AG04449 (cell line): ENCODE measurements at regions of chr17 and their contacts with region 1.

Region 1: DNA sequence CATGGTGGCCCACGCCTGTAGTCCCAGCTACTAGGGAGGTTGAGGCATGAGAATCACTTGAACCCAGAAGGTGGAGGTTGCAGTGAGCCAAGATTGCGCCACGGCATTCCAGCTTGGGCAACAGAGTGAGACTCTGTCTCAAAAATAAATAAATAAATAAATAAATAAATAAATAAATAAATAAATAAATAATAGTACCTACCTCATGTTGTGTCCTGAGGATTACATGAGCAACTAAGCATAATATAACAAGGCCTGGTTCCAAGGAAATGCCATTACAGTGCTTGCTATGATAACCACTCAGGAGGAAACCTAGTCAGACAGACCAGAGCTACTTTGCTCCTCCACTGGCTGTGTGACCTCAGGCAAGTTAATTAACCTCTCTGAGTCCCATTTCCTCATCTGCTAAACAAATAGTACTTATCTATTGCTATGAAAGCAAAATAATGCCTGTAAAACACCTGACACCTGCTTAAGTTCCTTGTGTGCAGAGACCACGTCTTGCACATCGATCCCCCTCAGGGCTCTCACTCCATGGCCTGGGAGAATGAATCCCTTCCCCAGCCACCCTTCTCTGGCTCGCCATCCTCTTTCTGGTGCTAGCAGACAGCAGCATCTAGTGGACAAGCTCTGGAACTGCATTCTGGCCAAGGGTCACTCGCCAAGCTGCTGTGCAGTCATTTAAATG is 7.5 kb downstream of the EPOP start:
- DNase-seq: no peak
- H3K4me3 ChIP-seq: no peak overlapping the region
- CTCF ChIP-seq: peak; percentile 98

Region 2: GRCh38 chr17:38498186-38498752 is 169.0 kb before region 1 on chr17:
- CTCF ChIA-PET with region 1: interaction called, 210 read pairs
- POLR2A ChIA-PET with region 1: no interaction called
- DNase-seq: no peak
- H3K4me3 ChIP-seq: no peak overlapping the region
- CTCF ChIP-seq: no peak

Region 3: GRCh38 chr17:38619937-38620550 is 47.2 kb before region 1 on chr17:
- CTCF ChIA-PET with region 1: no interaction called
- POLR2A ChIA-PET with region 1: no interaction called
- DNase-seq: no peak
- H3K4me3 ChIP-seq: no peak overlapping the region
- CTCF ChIP-seq: no peak

Region 4: GRCh38 chr17:38685491-38685890 is 18.2 kb after region 1 on chr17:
- CTCF ChIA-PET with region 1: interaction called, 10 read pairs
- POLR2A ChIA-PET with region 1: no interaction called
- DNase-seq: no peak
- H3K4me3 ChIP-seq: no peak overlapping the region
- CTCF ChIP-seq: no peak